ENCODE measurements at regions of chr5 and their contacts with region 1.

Region 1: DNA sequence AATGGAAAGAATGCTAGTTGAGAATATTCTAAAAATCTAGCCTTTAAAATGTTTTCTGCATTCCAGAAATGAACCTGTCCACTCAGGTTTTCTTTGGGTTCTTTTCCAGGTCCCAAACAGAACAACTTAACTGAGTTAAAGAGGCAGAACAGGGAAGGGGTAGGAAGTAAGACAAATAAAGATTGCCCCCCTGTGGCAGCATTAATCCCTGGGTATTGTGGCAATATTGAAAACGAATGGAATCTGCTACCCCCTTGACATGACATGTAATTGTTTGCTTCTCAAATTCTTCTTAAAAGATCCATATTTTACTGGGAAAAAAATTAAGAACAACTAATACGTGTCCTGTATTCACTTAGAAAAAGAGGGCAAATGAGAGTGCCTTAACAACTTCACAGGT is 9.3 kb upstream of the RBM22 start:
- DNase-seq: peak in 1 of 9 donors; percentile 20
- ATAC-seq: no peak
- H3K4me3 ChIP-seq: no peak overlapping the region
- H3K4me3 Mint-ChIP-seq: no peak overlapping the region
- H3K27ac ChIP-seq: no peak overlapping the region
- H3K27ac Mint-ChIP-seq: no peak overlapping the region
- H3K4me1 ChIP-seq: no peaks in the 10 kb centered on the region
- H3K4me1 Mint-ChIP-seq: no peaks in the 10 kb centered on the region
- H3K27me3 ChIP-seq: no peaks in the 10 kb centered on the region
- H3K27me3 Mint-ChIP-seq: no peaks in the 10 kb centered on the region

Region 2: GRCh38 chr5:150751096-150751891 is 41.1 kb after region 1 on chr5:
- CTCF ChIA-PET with region 1: no interaction called
- POLR2A ChIA-PET with region 1: interaction called, 3 read pairs
- intact Hi-C with region 1: loop called in 1 of 2 experiments (anchors 5 kb)
- DNase-seq: no peak
- ATAC-seq: no peak
- H3K4me3 ChIP-seq: no peak overlapping the region
- H3K4me3 Mint-ChIP-seq: peak overlapping the region in 2 of 10 donors; percentile 23 to 24
- H3K27ac ChIP-seq: no peak overlapping the region
- H3K27ac Mint-ChIP-seq: peak overlapping the region in 6 of 9 donors; percentile 4 to 86 (median 30)
- H3K4me1 ChIP-seq: peaks cover 0 to 3% of the 10 kb centered on the region in 2 donors
- H3K4me1 Mint-ChIP-seq: peaks cover 25 to 69% (median 53%) of the 10 kb centered on the region in 7 donors
- H3K27me3 ChIP-seq: no peaks in the 10 kb centered on the region
- H3K27me3 Mint-ChIP-seq: no peaks in the 10 kb centered on the region

Region 3: DNA sequence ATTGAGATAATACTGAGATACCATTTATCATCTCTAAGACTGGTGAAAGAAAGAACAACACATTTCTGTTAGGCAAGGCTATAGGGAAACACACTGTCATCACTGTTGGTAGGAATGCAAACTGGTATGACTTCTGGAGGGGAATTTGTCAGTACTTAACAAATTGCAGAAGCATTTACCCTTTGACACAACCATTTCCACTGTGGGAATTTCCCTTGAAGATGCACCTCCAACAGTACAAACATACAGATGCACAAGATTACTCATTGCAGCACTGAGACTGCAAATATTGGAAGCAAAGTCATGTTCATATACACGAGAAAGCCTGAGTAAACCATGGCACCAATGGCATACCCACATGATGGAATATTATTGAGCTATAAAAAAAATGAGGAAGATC is 560.4 kb after region 1 on chr5:
- CTCF ChIA-PET with region 1: no interaction called
- POLR2A ChIA-PET with region 1: no interaction called
- intact Hi-C with region 1: no loop called
- DNase-seq: no peak
- ATAC-seq: peak; percentile 69
- H3K4me3 ChIP-seq: no peak overlapping the region
- H3K4me3 Mint-ChIP-seq: no peak overlapping the region
- H3K27ac ChIP-seq: no peak overlapping the region
- H3K27ac Mint-ChIP-seq: no peak overlapping the region
- H3K4me1 ChIP-seq: no peaks in the 10 kb centered on the region
- H3K4me1 Mint-ChIP-seq: no peaks in the 10 kb centered on the region
- H3K27me3 ChIP-seq: no peaks in the 10 kb centered on the region
- H3K27me3 Mint-ChIP-seq: peaks cover 0 to 5% (median 0%) of the 10 kb centered on the region in 5 donors